ENCODE measurements at regions of chr20 and their contacts with region 1.

Region 1: GRCh38 chr20:24045621-24046318 is 57.2 kb upstream of the GGTLC1 start:
- DNase-seq: peak; percentile 74
- H3K4me3 Mint-ChIP-seq: no peak overlapping the region
- H3K27ac Mint-ChIP-seq: peak overlapping the region; percentile 61
- H3K4me1 Mint-ChIP-seq: peaks cover 42% of the 10 kb centered on the region
- H3K27me3 Mint-ChIP-seq: no peaks in the 10 kb centered on the region

Region 2: DNA sequence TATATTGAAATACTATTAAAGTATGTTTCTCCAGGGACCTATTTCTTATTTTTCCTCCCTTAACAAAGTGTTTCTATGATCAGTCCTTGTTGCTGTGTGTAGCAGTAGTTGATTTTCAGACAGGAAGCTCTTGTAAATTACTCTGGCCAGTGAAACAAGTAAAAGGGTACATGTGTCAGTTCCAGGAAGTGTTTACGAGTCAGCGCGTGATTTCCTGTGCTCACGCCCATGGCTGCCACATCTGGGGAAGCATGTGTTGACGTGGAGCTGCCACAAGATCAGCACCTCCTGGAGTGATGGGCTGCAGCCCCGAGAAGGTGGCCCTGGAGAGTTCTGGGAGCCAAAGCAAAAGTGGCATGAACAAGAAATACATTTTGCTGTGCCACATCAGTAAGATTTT is 18.5 kb before region 1 on chr20:
- CTCF ChIA-PET with region 1: interaction called, 9 read pairs
- intact Hi-C with region 1: loop called (anchors 1 kb)
- DNase-seq: peak; percentile 90
- H3K4me3 Mint-ChIP-seq: peak overlapping the region; percentile 40
- H3K27ac Mint-ChIP-seq: peak overlapping the region; percentile 84
- H3K4me1 Mint-ChIP-seq: peaks cover 30% of the 10 kb centered on the region
- H3K27me3 Mint-ChIP-seq: no peaks in the 10 kb centered on the region

Region 3: GRCh38 chr20:24034820-24035219 is 10.9 kb before region 1 on chr20:
- CTCF ChIA-PET with region 1: interaction called, 3 read pairs
- intact Hi-C with region 1: loop called (anchors 1 kb)
- DNase-seq: no peak
- H3K4me3 Mint-ChIP-seq: no peak overlapping the region
- H3K27ac Mint-ChIP-seq: no peak overlapping the region
- H3K4me1 Mint-ChIP-seq: peaks cover 19% of the 10 kb centered on the region
- H3K27me3 Mint-ChIP-seq: no peaks in the 10 kb centered on the region

Region 4: DNA sequence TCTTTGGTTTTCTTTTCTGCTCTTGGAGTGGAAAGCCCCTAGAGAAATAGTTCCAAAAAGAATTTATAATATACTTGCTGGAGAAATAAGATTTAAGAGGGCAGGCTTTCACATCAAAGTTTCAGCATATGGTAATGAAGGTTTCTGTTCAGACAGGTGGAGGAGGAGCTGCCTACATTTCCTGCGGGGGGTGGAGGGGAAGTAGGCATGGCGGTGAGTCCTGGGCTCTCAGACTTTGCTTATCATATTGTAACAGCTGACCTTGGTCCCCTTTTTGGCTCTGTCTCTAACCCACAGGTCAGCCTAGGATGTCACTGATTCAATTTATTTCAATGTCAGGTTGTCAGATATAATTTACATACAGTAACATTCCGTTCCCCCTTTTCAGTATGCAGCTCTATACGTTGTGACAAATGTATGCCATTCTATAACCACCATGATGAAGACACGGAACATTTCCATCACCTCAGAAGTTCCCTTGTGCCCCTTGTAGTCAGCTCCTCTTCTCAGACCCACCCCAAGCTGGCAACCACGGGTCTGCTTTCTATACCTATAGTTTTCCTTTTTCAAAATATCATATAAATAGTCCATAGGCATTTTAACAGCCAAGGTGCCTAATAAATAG is 20.4 kb after region 1 on chr20:
- CTCF ChIA-PET with region 1: no interaction called
- intact Hi-C with region 1: loop called (anchors 1 kb)
- DNase-seq: peak; percentile 61
- H3K4me3 Mint-ChIP-seq: peak overlapping the region; percentile 55
- H3K27ac Mint-ChIP-seq: peak overlapping the region; percentile 75
- H3K4me1 Mint-ChIP-seq: peaks cover 13% of the 10 kb centered on the region
- H3K27me3 Mint-ChIP-seq: no peaks in the 10 kb centered on the region

Region 5: DNA sequence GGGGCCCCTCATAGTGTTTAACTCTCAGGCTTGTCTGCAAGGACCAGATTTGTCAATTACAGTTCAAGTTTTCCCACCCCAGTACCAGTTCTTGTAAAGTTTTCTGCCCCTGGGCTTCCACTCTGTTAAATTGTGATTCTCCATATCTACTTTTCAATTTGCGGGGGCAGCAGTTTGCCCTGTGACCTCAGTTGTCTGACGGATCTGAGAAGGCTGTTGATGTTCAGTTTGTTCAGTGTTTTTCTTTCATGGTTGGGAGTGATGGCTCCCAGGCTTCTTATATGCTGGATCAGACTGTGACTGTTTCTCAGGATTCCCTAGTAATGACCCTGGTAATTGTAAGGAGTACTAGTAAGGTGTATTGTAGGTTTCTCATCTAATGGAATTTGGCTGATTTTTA is 43.8 kb after region 1 on chr20:
- CTCF ChIA-PET with region 1: no interaction called
- intact Hi-C with region 1: no loop called
- DNase-seq: no peak
- H3K4me3 Mint-ChIP-seq: no peak overlapping the region
- H3K27ac Mint-ChIP-seq: no peak overlapping the region
- H3K4me1 Mint-ChIP-seq: no peaks in the 10 kb centered on the region
- H3K27me3 Mint-ChIP-seq: no peaks in the 10 kb centered on the region